Panc1 (cell line): ENCODE measurements at regions of chr2 and their contacts with region 1.

Region 1: DNA sequence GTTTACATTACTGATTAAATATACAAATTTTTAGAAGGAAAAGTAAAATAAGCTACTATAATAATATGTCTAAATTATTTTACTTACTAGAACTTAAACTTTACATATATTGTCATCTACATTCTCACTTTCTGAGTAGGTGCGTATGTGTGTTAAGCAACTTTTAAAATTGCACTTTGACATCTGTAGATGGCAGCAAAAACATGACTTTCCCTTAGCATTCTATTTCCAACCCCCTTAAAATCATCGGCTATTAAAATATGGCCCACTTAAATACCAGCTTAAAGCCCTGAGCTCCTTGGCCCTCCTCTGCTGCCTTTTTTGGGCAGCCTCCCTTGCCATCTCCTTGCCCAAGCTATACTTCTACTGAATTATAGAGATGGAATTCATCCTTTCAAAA is 78.0 kb downstream of the UPP2 start:
- DNase-seq: no peak
- ATAC-seq: 0 out of 2 replicates have a peak, but pooled peaks have one; percentile 63
- H3K4me3 ChIP-seq: no peak overlapping the region
- H3K27ac ChIP-seq: no peak overlapping the region
- H3K4me1 ChIP-seq: no peaks in the 10 kb centered on the region
- H3K27me3 ChIP-seq: peaks cover 2% of the 10 kb centered on the region; the same call in 1 of the 2 replicates
- CTCF ChIP-seq: peak; percentile 45; the same call in 1 of the 2 replicates

Region 2: DNA sequence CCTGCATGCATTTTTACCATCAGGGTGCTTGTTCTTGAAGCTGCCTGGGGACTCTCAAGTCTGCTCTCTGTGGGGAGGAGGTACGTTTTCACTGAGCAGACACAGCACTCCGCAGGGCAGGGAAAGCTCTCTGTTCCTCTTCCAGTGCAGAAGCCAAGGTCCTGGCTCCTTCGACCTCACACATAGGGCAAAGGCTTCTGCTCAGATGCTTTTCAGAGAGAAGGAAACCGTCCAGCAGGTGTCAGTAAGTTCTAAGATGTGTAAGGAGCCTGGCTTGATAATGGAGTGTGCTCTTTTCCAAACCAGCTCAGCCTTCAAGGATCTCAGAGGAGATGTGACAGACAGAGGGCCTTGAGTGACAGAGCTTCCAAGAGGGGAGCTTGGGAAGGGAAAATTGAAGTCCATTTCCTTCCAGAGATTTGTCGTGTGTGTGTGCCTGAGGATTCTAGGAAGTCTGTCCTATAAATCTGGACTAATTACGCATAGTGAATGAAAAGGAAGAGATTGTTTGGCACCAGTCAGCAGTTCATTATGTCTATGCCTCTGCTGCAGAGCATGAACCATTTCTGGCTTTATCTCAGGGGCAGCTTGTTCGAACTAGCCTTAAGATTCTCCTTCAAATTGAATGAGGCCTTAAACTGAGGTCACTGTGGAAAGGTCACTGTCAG is 145.3 kb before region 1 on chr2:
- CTCF ChIA-PET with region 1: no interaction called
- POLR2A ChIA-PET with region 1: no interaction called
- in situ Hi-C with region 1: no loop called
- intact Hi-C with region 1: loop called (anchors 10 kb)
- DNase-seq: peak; percentile 36
- ATAC-seq: peak; percentile 95
- H3K4me3 ChIP-seq: no peak overlapping the region
- H3K27ac ChIP-seq: no peak overlapping the region
- H3K4me1 ChIP-seq: no peaks in the 10 kb centered on the region
- H3K27me3 ChIP-seq: peaks cover 12% of the 10 kb centered on the region
- CTCF ChIP-seq: peak; percentile 67

Region 3: DNA sequence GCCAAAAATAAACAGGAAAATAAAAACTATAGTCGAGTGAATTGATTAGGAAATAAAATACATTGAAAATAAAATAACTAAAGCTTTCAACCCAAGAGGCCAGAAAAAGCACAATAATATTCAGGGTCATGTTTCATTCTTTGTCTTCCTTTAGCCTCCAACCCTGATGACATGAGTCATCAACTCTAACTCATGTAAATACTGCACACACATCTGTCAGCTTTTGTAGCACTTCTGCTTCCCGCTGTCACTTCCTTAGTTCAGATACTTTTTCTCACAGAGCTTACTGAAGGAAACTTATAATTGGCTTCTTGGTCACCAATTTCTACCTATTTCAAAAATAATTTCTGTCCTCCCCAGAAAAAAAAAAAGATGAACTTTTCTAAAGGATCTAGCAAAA is 34.8 kb after region 1 on chr2:
- CTCF ChIA-PET with region 1: no interaction called
- POLR2A ChIA-PET with region 1: no interaction called
- in situ Hi-C with region 1: no loop called
- intact Hi-C with region 1: no loop called
- DNase-seq: no peak
- ATAC-seq: no peak
- H3K4me3 ChIP-seq: no peak overlapping the region
- H3K27ac ChIP-seq: no peak overlapping the region
- H3K4me1 ChIP-seq: no peaks in the 10 kb centered on the region
- H3K27me3 ChIP-seq: no peaks in the 10 kb centered on the region
- CTCF ChIP-seq: no peak